ENCODE measurements at regions of chr19 and their contacts with region 1.

Region 1: DNA sequence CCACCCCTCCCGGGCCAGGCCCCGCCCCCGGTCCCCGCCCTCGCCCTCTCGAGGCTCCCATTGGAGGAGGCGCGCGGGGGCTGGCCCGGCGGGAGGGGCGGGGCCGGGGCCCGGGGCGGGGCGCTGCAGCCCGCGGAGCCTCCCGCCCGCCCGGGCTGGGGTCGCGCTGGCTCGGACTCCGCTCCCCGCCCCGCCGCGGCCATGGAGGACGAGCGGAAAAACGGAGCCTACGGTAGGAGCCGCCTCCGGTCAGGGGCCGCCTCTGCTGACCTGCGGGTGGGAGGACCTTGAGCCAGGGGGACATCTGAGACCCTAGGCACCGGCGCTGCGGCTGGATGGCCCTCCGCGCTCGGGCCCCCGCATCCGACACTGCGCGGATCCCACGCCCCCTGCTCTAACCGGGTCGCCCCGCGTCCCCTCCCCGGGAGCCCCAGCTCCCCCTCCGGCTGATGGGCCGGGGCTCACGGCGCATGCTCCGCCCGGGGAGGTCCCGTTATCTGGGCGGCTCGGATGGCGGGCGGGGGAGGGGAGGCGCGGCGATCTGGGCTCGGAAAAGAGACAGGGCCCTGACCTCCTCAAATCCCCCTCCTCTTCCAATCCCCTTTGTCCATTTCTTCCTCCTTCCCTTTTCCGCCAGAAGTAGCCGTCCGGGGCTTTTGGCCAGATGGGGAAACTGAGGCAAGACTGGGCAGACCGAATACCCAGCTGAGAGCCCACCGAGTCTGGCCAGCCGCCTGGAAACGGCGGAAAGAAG is 15.4 kb upstream of the AP1M2 start:
- DNase-seq: peak; percentile 82 to 84 (median 84)
- H3K4me3 ChIP-seq: peak overlapping the region; percentile 85 to 94
- H3K4me3 Mint-ChIP-seq: peak overlapping the region; percentile 98 to 99 (median 99)
- H3K27ac ChIP-seq: peak overlapping the region; percentile 96
- H3K27ac Mint-ChIP-seq: peak overlapping the region; percentile 99 to 100 (median 100)
- H3K4me1 ChIP-seq: peaks cover 29% of the 10 kb centered on the region
- H3K4me1 Mint-ChIP-seq: peaks cover 17 to 34% (median 21%) of the 10 kb centered on the region in 4 donors
- H3K27me3 ChIP-seq: no peaks in the 10 kb centered on the region
- H3K27me3 Mint-ChIP-seq: no peaks in the 10 kb centered on the region

Region 2: DNA sequence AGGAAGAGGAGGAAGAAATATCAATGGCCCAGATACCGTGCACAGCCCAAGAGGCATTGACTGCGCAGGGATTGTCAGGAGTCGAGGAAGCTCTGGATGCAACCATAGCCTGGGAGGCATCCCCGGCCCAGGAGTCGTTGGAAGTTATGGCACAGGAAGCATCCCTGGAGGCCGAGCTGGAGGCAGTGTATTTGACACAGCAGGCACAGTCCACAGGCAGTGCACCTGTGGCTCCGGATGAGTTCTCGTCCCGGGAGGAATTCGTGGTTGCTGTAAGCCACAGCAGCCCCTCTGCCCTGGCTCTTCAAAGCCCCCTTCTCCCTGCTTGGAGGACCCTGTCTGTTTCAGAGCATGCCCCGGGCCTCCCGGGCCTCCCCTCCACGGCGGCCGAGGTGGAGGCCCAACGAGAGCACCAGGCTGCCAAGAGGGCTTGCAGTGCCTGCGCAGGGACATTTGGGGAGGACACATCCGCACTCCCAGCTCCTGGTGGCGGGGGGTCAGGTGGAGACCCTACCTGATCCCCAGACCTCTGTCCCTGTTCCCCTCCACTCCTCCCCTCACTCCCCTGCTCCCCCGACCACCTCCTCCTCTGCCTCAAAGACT is 135.3 kb before region 1 on chr19:
- CTCF ChIA-PET with region 1: no interaction called
- POLR2A ChIA-PET with region 1: no interaction called
- intact Hi-C with region 1: no loop called
- DNase-seq: no peak
- H3K4me3 ChIP-seq: no peak overlapping the region
- H3K4me3 Mint-ChIP-seq: no peak overlapping the region
- H3K27ac ChIP-seq: no peak overlapping the region
- H3K27ac Mint-ChIP-seq: peak overlapping the region in 2 of 7 donors; percentile 27 to 57
- H3K4me1 ChIP-seq: no peaks in the 10 kb centered on the region
- H3K4me1 Mint-ChIP-seq: peaks cover 0 to 6% (median 1%) of the 10 kb centered on the region in 4 donors
- H3K27me3 ChIP-seq: no peaks in the 10 kb centered on the region
- H3K27me3 Mint-ChIP-seq: no peaks in the 10 kb centered on the region

Region 3: DNA sequence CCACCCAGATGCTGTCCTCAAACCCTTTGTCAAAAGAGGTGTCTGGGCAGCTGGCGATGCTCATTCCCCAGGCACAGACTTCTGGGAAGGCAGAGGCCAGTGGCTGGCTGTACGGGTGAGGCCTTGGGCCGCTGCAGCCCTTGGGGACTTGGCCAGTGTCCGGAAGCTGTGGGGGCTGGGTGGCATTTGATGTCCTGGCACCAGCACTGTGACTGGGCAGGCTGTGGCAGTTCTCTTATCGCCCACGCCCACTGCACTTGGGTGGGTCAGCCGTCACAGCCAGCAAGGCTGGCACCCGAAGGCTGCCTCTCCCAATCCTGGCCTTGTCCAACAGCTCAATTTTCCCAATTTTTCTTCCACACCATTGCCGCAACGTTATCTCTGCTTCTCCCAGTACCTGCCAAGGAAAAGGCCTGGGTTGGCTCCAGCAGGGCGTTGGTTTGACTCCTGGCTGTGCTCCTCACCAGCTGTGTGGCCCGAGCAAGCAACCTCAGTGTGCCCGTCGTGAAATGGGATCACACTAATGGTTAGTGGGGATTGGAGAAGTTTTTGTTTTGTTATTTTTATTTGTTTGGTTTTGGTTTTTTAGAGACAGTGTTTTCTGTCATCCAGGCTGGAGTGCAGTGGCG is 10.1 kb after region 1 on chr19:
- CTCF ChIA-PET with region 1: interaction called, 7 read pairs
- POLR2A ChIA-PET with region 1: interaction called, 17 read pairs
- intact Hi-C with region 1: no loop called
- DNase-seq: no peak
- H3K4me3 ChIP-seq: no peak overlapping the region
- H3K4me3 Mint-ChIP-seq: peak overlapping the region in 1 of 8 donors; percentile 45
- H3K27ac ChIP-seq: no peak overlapping the region
- H3K27ac Mint-ChIP-seq: peak overlapping the region in 4 of 7 donors; percentile 29 to 77 (median 43)
- H3K4me1 ChIP-seq: peaks cover 35% of the 10 kb centered on the region
- H3K4me1 Mint-ChIP-seq: peaks cover 8 to 40% (median 27%) of the 10 kb centered on the region in 4 donors
- H3K27me3 ChIP-seq: no peaks in the 10 kb centered on the region
- H3K27me3 Mint-ChIP-seq: no peaks in the 10 kb centered on the region

Region 4: GRCh38 chr19:10625003-10625776 is 22.7 kb after region 1 on chr19 and contains the start of gene SLC44A2:
- CTCF ChIA-PET with region 1: interaction called, 3 read pairs
- POLR2A ChIA-PET with region 1: interaction called, 65 read pairs
- intact Hi-C with region 1: no loop called
- DNase-seq: no peak
- H3K4me3 ChIP-seq: no peak within 1 kb of the TSS
- H3K4me3 Mint-ChIP-seq: peak within 1 kb of the TSS in 7 of 8 donors; percentile 38 to 64 (median 53)
- H3K27ac ChIP-seq: no peak within 1 kb of the TSS
- H3K27ac Mint-ChIP-seq: peak within 1 kb of the TSS; percentile 50 to 80 (median 75)
- H3K4me1 ChIP-seq: peaks cover 38% of the 10 kb centered on the region
- H3K4me1 Mint-ChIP-seq: peaks cover 23 to 48% (median 31%) of the 10 kb centered on the region in 4 donors
- H3K27me3 ChIP-seq: no peaks in the 10 kb centered on the region
- H3K27me3 Mint-ChIP-seq: no peaks in the 10 kb centered on the region
- total RNA-seq, gene SLC44A2: 203 to 204 TPM

Region 5: DNA sequence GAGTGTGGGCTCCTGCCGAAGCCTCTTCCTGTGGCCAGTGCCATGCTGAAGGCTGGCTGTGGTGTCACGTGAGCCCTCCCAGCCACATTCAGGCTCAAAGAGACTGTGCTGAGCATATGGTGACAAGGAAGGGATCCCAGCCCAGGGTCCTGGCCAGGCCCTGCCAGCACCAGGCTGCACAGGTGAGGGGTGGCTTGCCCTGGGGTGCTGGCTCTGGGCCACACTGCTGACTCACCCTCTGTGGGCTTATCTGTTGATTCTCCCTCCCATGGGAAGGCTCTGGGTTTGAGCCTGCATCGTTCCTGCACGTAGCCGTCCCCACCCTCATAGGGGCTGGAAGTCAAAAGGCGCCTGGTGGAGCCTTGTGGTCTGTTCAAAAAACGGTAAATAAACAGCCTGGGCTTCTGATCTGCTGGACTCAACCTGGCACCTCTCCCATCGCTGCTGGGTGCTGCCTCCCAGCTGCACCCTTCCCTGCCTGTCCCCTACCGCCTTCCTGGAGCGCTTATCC is 146.5 kb after region 1 on chr19:
- CTCF ChIA-PET with region 1: no interaction called
- POLR2A ChIA-PET with region 1: no interaction called
- intact Hi-C with region 1: no loop called
- DNase-seq: no peak
- H3K4me3 ChIP-seq: no peak overlapping the region
- H3K4me3 Mint-ChIP-seq: peak overlapping the region in 1 of 8 donors; percentile 25
- H3K27ac ChIP-seq: peak overlapping the region; percentile 5
- H3K27ac Mint-ChIP-seq: peak overlapping the region; percentile 52 to 85 (median 70)
- H3K4me1 ChIP-seq: peaks cover 76% of the 10 kb centered on the region
- H3K4me1 Mint-ChIP-seq: peaks cover 30 to 90% (median 60%) of the 10 kb centered on the region in 4 donors
- H3K27me3 ChIP-seq: no peaks in the 10 kb centered on the region
- H3K27me3 Mint-ChIP-seq: no peaks in the 10 kb centered on the region

Measured in CD4-positive, alpha-beta memory T cell (primary cell).